Head of caudate nucleus (tissue), 42 donors: ENCODE measurements at regions of chr3 and their contacts with region 1.

Region 1: GRCh38 chr3:107753480-107753879 is 230.7 kb downstream of the BBX start:
- DNase-seq: peak; percentile 16 to 87 (median 68)

Region 2: DNA sequence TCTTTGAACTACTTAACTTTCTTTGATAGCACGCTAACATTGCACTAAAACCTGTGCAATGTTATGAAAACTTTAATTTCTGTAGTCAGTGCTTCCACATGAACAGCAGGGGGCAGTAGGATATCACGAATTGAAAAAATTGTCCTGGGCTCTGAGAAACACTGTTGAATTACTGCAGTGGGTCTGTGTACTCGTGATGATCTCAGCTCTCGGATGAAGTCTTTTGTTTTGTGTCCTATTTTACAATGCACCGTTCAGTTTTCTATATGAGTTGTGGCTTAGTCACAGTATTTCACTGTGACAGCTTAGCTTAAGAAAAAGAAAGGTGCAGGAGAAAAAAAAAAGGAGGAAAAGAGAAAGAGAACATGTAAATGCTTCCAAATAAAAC is 517.6 kb before region 1 on chr3:
- intact Hi-C with region 1: loop called (anchors 10 kb)
- DNase-seq: peak in 33 of 42 donors; percentile 19 to 92 (median 75)

Region 3: GRCh38 chr3:107800710-107801109 is 47.2 kb after region 1 on chr3:
- intact Hi-C with region 1: loop called (anchors 10 kb)
- DNase-seq: peak in 2 of 42 donors; percentile 26 to 36